ENCODE measurements at regions of chr20 and their contacts with region 1.

Region 1: DNA sequence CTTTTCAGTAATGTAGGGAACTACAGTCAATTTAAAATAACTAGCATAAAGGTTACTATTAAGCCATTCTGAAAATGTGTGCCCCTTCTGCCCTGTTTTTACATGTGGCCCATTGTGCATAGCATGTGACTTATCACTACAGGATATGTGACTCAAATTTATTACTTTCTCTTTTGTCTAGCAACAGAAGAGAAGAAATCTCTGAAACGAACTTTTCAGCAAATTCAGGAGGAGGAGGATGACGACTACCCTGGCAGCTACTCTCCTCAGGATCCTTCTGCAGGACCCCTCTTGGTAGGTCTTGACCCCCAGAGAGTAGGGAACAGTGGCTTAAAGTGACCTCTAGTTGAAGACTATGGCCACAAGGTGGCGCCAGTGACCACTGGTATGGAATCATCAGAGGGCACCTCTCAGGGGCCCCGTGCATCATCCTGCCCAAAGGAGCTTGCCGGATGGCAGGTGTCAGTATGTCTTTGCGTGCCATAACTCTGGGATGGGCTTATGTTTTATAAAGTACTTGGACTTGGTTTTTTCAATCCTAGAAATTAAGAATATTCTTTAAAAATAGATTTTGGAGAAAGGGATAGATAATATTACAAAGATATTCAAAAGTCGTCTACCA is 23.9 kb downstream of the RPRD1B start:
- DNase-seq: peak; percentile 73 to 88
- H3K4me3 ChIP-seq: no peak overlapping the region
- H3K4me1 ChIP-seq: peaks cover 6% of the 10 kb centered on the region
- H3K27me3 ChIP-seq: no peaks in the 10 kb centered on the region

Region 2: DNA sequence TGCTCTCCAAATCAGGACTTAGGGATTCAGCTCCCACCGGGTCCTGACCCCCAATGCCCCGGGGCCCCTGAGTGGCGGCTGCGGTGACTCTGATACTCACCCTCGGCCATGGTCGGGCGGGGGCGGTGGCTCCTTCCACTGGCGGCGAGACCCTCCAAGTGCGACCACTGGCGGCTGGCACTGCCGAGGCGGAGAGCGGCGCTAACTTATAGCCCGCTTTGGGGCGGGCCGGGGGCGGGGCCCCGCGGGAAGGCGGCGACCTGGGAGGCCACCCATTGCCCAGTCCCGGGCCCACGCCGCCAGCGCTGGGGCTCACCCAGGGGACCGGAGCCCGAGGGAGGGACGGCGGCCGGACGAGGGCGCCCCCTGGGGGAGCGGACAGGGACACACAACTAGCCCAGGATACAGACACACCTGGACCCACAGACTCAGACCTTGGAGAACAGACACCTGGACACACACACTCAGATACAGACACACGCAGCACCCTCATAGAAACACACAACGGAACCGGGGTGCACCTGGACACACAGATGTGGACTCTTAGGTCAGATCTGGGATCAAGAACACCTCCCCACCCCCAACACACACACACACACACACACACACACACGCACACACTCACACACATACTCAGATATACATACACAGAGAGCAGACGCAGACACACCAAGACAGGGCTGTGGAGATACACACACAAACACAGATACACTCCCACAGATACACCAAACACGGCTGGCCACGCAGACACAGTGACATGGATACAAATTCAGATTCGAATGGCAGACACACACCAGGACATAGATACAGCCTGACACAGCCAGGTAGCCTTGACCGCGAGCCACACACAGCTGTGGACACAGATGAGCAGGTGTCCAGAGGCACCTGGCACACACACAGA is 107.9 kb after region 1 on chr20 and contains the start of gene TGM2:
- in situ Hi-C with region 1: loop called (anchors 25 kb)
- DNase-seq: peak; percentile 66 to 88
- H3K4me3 ChIP-seq: peak within 1 kb of the TSS; percentile 28
- H3K4me1 ChIP-seq: no peaks in the 10 kb centered on the region; the same call in 1 of the 2 replicates
- H3K27me3 ChIP-seq: no peaks in the 10 kb centered on the region

Region 3: DNA sequence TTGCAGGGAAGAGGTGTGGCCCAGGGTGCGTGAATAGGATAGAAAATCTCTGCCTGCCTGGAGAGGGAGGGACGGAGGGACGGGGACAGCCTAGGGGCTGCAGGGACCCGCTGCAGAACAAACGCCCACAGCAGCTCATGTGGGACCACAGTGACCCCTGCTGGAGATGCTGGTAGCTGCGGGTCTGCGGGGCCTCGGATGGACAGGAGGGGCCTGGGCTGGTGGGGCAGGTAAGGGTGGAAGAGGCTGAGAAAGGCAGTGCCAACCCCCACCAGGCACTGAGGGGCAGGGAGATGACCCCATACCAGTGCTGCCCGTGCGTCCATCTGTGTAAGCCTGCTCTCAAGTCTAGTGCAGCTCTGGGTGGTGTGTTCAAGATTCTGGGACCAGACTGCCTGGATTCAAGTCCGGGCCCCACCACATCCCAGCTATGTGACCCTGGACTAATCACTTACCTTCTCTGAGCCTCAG is 163.7 kb after region 1 on chr20:
- in situ Hi-C with region 1: loop called (anchors 5 kb)
- DNase-seq: peak; percentile 64 to 89
- H3K4me3 ChIP-seq: no peak overlapping the region
- H3K4me1 ChIP-seq: 0 out of 2 replicates have a peak, but pooled peaks cover 2% of the 10 kb centered on the region
- H3K27me3 ChIP-seq: no peaks in the 10 kb centered on the region

Region 4: GRCh38 chr20:38418509-38419204 is 361.2 kb after region 1 on chr20:
- in situ Hi-C with region 1: loop called (anchors 10 kb)
- DNase-seq: peak in 1 of 2 experiments; percentile 36
- H3K4me3 ChIP-seq: no peak overlapping the region
- H3K4me1 ChIP-seq: peaks cover 16% of the 10 kb centered on the region
- H3K27me3 ChIP-seq: no peaks in the 10 kb centered on the region